Activated naive CD4-positive, alpha-beta T cell treated with anti-CD3 and anti-CD28 coated beads for 36 hours (primary cell): ENCODE measurements at regions of chr19 and their contacts with region 1.

Region 1: DNA sequence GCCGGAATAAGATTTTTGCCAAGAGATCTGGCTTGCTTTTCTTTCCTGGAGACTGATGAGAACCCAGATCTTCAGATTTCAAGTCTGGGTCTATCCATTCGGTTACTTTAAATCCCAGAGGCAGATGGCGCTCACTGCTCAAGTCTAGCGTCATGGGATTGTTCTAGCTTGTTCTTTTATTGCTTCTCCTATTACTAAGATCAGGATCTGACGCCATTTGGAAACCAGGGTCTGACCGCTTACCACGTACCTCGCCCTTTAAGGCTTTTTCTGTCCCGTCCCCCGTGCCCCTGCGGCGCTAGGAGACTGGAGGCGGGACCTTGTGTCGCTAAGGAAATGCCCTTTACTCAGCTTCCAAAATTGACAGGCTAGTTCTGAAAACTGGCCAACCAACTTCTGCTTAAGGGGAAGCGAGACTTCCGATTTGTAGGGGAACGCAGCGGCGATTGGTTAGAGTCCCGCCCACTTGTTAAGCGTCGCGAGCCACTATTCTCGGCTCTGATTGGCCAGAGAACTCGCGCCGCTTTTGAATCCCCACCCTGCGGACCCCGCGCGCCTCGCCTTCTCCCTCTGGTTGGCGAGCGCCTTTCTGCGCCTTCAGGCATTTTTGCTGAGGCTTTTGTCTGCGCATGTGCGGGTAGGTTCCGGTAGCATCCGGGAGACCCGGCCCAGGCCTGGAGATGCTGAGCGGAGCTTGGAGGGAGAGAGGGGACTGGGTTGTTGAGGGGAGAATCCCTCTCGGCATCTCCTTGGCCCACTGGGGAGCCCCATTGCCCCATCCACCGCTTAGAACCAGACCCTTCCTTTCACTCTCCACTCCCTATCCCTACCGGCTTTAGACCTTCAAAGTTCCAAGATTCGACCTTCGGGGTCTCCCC is 3.8 kb upstream of the C19orf84 start:
- DNase-seq: peak; percentile 98
- H3K4me3 Mint-ChIP-seq: peak overlapping the region; percentile 95
- H3K27ac Mint-ChIP-seq: peak overlapping the region; percentile 96
- H3K4me1 Mint-ChIP-seq: peaks cover 35% of the 10 kb centered on the region
- H3K27me3 Mint-ChIP-seq: no peaks in the 10 kb centered on the region

Region 2: GRCh38 chr19:51338563-51339312 is 55.5 kb before region 1 on chr19:
- CTCF ChIA-PET with region 1: interaction called, 5 read pairs
- intact Hi-C with region 1: loop called (anchors 1 kb)
- DNase-seq: peak; percentile 91
- H3K4me3 Mint-ChIP-seq: peak overlapping the region; percentile 83
- H3K27ac Mint-ChIP-seq: peak overlapping the region; percentile 46
- H3K4me1 Mint-ChIP-seq: peaks cover 13% of the 10 kb centered on the region
- H3K27me3 Mint-ChIP-seq: no peaks in the 10 kb centered on the region

Region 3: DNA sequence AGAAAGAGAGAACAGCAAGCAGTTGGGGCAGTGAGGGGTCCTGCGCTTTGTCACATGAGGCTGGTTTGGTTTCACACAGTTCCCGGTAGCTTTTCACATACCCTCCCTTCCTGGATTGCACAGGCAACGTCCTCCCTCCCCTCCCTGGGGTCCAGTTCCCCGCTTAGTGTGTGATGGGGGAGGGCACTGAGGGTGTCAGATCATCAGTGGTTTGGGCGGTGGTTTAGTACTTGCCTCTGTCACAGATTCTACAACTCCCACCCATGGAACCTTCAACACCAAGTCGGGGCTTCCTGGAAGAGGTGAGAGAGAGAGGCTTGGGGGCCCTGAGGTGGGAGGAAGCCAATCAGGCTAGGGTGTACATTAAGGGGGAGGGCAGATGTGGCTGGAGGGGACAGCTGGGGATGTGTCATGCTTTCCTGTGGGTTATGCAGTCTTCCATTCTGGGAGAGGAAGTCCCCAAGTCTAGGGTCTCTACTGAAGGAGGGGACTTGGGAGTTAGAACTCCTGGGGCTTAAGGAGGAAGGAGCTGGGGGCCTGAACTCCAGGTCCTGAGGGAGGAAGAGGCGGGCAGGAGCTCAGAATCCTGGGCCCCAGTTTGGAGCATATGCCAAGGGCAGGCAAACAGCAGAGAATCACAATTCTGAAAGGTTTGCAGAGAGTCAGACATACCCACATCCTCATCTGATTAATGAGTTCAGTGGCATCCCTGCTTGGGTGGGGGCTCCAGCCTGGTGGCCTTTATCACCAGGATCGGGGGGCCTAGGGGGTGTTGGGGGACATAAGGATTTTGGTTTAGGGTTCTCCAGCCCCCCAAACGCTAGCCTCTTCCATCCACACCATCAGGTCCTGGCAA is 21.3 kb before region 1 on chr19 and contains the start of gene NKG7:
- CTCF ChIA-PET with region 1: interaction called, 3 read pairs
- intact Hi-C with region 1: loop called (anchors 1 kb)
- DNase-seq: peak; percentile 87
- H3K4me3 Mint-ChIP-seq: peak within 1 kb of the TSS; percentile 60
- H3K27ac Mint-ChIP-seq: peak within 1 kb of the TSS; percentile 88
- H3K4me1 Mint-ChIP-seq: peaks cover 73% of the 10 kb centered on the region
- H3K27me3 Mint-ChIP-seq: no peaks in the 10 kb centered on the region
- total RNA-seq, gene NKG7: 16.3 to 17.5 TPM

Region 4: DNA sequence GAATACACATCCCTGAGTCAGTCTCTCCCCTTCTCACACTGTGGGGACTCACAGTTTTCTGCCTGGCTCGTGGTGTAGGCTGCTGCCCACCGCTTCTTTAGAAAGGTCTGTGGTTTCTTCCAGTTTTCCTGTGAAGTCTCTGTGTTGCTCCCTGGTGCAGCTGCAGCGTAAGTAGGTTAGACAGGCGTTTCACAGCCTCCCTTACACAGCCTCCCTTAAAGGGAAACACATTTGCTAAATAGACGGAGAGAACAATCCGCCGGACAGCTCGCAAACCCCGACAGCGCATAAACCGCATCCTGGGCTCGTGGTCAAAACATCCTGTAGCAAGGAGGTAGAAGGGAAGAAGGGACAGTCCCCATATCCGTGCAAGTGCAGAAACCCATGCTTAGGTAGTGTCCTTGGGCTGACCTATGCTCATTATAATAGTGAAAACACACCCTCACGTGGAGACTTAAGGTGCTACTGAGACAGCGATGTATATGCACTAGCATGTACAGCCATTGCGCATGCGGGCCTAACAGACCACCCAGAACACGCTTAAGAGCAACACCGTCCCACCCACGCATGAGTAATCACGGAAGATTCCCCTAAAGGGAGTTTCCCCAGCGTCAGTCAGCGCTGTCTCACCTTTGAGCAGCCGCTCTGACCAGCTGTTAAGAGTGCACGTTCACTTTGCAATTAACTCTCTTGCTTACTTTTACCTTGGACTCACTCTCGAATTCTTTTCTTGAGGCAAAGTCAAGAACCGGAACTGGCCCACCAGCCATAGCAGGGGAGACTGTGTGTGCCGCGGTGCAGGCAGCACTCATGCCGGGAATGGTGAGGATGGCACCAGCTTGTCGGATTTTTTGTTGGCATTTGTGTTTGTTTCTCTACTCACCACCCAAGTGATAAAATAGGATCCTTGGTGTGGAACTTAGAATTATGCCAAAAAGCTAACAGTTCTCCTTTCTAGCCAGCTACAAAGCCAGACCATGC is 47.5 kb after region 1 on chr19:
- CTCF ChIA-PET with region 1: interaction called, 6 read pairs
- intact Hi-C with region 1: loop called (anchors 1 kb)
- DNase-seq: peak; percentile 95
- H3K4me3 Mint-ChIP-seq: peak overlapping the region; percentile 62
- H3K27ac Mint-ChIP-seq: peak overlapping the region; percentile 87
- H3K4me1 Mint-ChIP-seq: peaks cover 43% of the 10 kb centered on the region
- H3K27me3 Mint-ChIP-seq: peaks cover 4% of the 10 kb centered on the region

Region 5: DNA sequence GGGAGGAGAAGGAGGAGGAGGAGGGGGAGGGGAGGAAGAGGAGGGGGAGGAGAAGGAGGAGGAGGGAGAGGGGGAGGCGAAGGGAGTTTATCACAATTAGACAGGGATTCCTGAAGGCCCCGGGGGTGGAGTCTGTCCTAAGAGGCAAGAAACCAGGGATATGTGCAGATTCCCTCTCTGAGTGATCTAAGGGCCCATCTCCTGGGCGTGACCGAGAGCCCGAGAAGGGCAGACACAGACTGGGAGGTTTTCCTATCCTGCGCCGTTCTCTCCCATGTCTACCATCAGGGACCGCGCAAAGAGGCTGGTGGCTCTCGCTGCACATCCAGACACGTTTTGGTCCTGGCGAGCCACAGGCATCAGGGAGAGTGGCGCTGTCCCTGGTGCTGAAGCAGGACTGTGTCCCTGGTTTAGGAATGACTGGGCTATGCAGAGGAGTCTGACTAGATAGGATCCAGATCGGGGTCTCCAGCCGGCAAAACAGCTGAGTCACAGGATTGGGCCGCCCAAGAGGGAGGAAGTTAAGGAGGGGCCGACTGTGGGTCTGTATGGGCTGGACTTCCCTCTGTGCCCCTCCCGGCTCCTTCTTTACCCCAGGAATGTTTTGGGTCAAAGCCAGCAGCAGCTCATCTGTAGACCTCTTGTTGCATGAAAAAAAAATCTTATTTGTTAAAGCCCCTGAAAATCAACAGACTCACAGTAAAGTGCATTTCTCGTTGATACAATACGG is 159.0 kb after region 1 on chr19:
- CTCF ChIA-PET with region 1: no interaction called
- intact Hi-C with region 1: no loop called
- DNase-seq: peak; percentile 76
- H3K4me3 Mint-ChIP-seq: no peak overlapping the region
- H3K27ac Mint-ChIP-seq: no peak overlapping the region
- H3K4me1 Mint-ChIP-seq: peaks cover 6% of the 10 kb centered on the region
- H3K27me3 Mint-ChIP-seq: peaks cover 52% of the 10 kb centered on the region

Region 6: GRCh38 chr19:51593969-51594773 is 200.0 kb after region 1 on chr19:
- CTCF ChIA-PET with region 1: no interaction called
- intact Hi-C with region 1: loop called (anchors 1 kb)
- DNase-seq: peak; percentile 97
- H3K4me3 Mint-ChIP-seq: peak overlapping the region; percentile 89
- H3K27ac Mint-ChIP-seq: peak overlapping the region; percentile 68
- H3K4me1 Mint-ChIP-seq: peaks cover 11% of the 10 kb centered on the region
- H3K27me3 Mint-ChIP-seq: no peaks in the 10 kb centered on the region